ENCODE measurements at regions of chr10 and their contacts with region 1.

Region 1: GRCh38 chr10:43105102-43105785 is 28.4 kb downstream of the RET start:
- DNase-seq: peak; percentile 77
- H3K4me3 Mint-ChIP-seq: peak overlapping the region; percentile 73
- H3K27ac Mint-ChIP-seq: no peak overlapping the region
- H3K4me1 Mint-ChIP-seq: peaks cover 12% of the 10 kb centered on the region
- H3K27me3 Mint-ChIP-seq: peaks cover 21% of the 10 kb centered on the region

Region 2: DNA sequence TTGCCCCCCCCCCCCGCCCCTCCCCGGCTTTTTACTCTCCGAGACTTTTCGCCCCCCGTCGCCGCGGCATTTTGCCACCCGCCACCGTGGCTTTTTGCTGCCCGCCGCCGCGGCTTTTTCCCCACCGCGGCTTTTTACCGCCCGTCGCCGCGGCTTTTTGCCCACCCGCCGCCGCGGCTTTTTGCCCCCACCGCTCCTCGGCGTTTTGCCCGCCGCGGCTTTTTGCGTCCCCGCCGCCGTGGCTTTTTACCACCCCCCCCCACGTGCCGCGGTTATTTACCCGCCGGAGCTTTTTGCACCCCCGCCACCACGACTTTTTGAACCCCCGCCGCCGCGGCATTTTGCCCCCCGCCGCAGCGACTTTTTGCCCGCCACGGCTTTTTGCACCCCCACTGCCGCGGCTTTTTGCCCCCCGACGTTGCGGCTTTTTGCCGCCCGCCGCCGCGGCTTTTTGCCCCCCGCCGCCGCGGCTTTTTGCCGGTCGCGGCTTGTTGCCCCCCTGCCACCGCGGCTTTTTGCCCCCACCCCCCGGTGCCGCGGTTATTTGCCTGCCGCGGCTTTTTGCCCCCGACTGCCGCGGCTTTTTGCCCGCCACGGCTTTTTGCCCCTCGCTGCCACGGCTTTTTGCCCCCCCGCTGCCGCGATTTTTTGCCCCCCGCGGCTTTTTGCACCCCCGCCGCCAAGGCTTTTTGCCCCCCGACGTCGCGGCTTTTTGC is 928.0 kb before region 1 on chr10:
- intact Hi-C with region 1: loop called (anchors 10 kb)
- DNase-seq: no peak
- H3K4me3 Mint-ChIP-seq: no peak overlapping the region
- H3K27ac Mint-ChIP-seq: no peak overlapping the region
- H3K4me1 Mint-ChIP-seq: no peaks in the 10 kb centered on the region
- H3K27me3 Mint-ChIP-seq: peaks cover 30% of the 10 kb centered on the region

Region 3: GRCh38 chr10:42638055-42638820 is 467.0 kb before region 1 on chr10 and contains the start of gene ZNF33B:
- intact Hi-C with region 1: loop called (anchors 1 kb)
- DNase-seq: peak; percentile 94
- H3K4me3 Mint-ChIP-seq: peak within 1 kb of the TSS; percentile 98
- H3K27ac Mint-ChIP-seq: peak within 1 kb of the TSS; percentile 98
- H3K4me1 Mint-ChIP-seq: peaks cover 21% of the 10 kb centered on the region
- H3K27me3 Mint-ChIP-seq: peaks cover 1% of the 10 kb centered on the region
- total RNA-seq, gene ZNF33B: 7.6 and 7.9 TPM in 2 replicates

Region 4: GRCh38 chr10:42782446-42783180 is 322.6 kb before region 1 on chr10 and contains the start of gene BMS1:
- intact Hi-C with region 1: loop called (anchors 1 kb)
- DNase-seq: peak; percentile 88
- H3K4me3 Mint-ChIP-seq: peak within 1 kb of the TSS; percentile 99
- H3K27ac Mint-ChIP-seq: peak within 1 kb of the TSS; percentile 100
- H3K4me1 Mint-ChIP-seq: peaks cover 17% of the 10 kb centered on the region
- H3K27me3 Mint-ChIP-seq: peaks cover 1% of the 10 kb centered on the region
- total RNA-seq, gene BMS1: 35.6 and 36.5 TPM in 2 replicates

Region 5: DNA sequence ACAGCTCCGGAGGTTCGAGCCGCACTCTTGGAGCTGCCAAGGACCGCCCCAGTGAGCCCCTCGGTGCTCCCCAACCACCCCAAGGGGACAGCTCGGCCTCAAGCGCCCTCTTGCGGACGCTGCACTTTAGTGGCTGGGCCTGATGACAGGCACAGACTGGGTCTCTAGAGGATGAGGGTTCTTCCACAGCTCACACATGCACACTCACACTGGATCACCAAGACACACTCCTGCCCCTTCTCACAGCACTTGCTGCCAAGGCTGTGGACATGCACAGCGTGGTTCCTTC is 26.3 kb before region 1 on chr10:
- intact Hi-C with region 1: loop called (anchors 1 kb)
- DNase-seq: no peak
- H3K4me3 Mint-ChIP-seq: peak overlapping the region; percentile 30
- H3K27ac Mint-ChIP-seq: no peak overlapping the region
- H3K4me1 Mint-ChIP-seq: peaks cover 11% of the 10 kb centered on the region
- H3K27me3 Mint-ChIP-seq: peaks cover 33% of the 10 kb centered on the region

Region 6: GRCh38 chr10:43204943-43205671 is 99.9 kb after region 1 on chr10:
- intact Hi-C with region 1: loop called (anchors 1 kb)
- DNase-seq: peak; percentile 36
- H3K4me3 Mint-ChIP-seq: no peak overlapping the region
- H3K27ac Mint-ChIP-seq: no peak overlapping the region
- H3K4me1 Mint-ChIP-seq: no peaks in the 10 kb centered on the region
- H3K27me3 Mint-ChIP-seq: no peaks in the 10 kb centered on the region

Region 7: DNA sequence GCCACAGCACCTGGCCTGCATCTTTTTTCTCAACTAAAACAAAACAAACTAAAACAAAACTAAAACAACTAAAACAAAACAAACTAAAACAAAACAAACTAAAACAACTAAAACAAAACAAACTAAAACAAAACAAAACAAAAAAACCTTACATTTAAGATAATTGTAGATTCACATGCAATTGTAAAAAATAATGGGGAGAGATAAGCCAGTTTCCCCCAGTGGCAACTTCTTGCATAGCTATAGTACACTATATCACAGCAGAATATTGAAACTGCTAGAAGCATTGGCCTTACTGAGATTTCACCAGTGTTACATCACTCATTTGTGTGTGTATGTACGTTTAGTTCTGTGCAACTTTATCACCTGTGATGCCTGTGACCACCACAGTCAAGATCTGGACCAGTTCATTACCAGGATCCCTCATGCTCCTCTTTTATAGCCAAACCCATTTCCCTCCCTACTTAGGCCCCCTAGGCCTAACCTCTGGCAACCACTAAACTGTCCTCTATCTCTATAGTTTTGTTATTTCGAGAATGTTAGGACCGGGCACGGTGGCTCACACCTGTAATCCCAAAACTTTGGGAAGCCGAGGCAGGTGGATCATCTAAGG is 275.5 kb after region 1 on chr10:
- intact Hi-C with region 1: no loop called
- DNase-seq: no peak
- H3K4me3 Mint-ChIP-seq: no peak overlapping the region
- H3K27ac Mint-ChIP-seq: no peak overlapping the region
- H3K4me1 Mint-ChIP-seq: no peaks in the 10 kb centered on the region
- H3K27me3 Mint-ChIP-seq: peaks cover 4% of the 10 kb centered on the region

Measured in activated T-helper 1 cell treated with anti-CD3 and anti-CD28 coated beads, Interleukin-12 subunit alpha, Interleukin-12 subunit beta, Interleukin-2, Interleukin-4 antibody, amounts not matched to agents 30 ng/mL and 10 ng/mL and 1 ng/mL, durations not matched to agents 14 hours and 24 hours and 36 hours (primary cell).